ENCODE measurements at regions of chr19 and their contacts with region 1.

Region 1: GRCh38 chr19:11399667-11400066 is 15.6 kb upstream of the EPOR start:
- DNase-seq: no peak
- ATAC-seq: no peak
- H3K4me3 ChIP-seq: no peak overlapping the region
- H3K27ac ChIP-seq: no peak overlapping the region
- H3K4me1 ChIP-seq: no peaks in the 10 kb centered on the region
- H3K27me3 ChIP-seq: no peaks in the 10 kb centered on the region
- CTCF ChIP-seq: no peak

Region 2: GRCh38 chr19:9989504-9989903 is 1410.2 kb before region 1 on chr19:
- CTCF ChIA-PET with region 1: no interaction called
- POLR2A ChIA-PET with region 1: interaction called, 15 read pairs
- in situ Hi-C with region 1: no loop called
- intact Hi-C with region 1: no loop called
- DNase-seq: no peak
- ATAC-seq: no peak
- H3K4me3 ChIP-seq: no peak overlapping the region
- H3K27ac ChIP-seq: no peak overlapping the region
- H3K4me1 ChIP-seq: no peaks in the 10 kb centered on the region
- H3K27me3 ChIP-seq: no peaks in the 10 kb centered on the region
- CTCF ChIP-seq: no peak

Measured in Panc1 (cell line).